HCT116 (cell line): ENCODE measurements at regions of chr18 and their contacts with region 1.

Region 1: GRCh38 chr18:24212939-24213338 is 74.1 kb downstream of the CABYR start:
- DNase-seq: peak; percentile 94
- ATAC-seq: peak; percentile 89
- H3K4me3 ChIP-seq: peak overlapping the region in 1 of 2 experiments; percentile 27; a peak in 2 of 4 replicates
- H3K27ac ChIP-seq: peak overlapping the region; percentile 74; the same call in 1 of the 2 replicates
- H3K4me1 ChIP-seq: peaks cover 71 to 86% of the 10 kb centered on the region in 2 experiments
- H3K27me3 ChIP-seq: no peaks in the 10 kb centered on the region
- CTCF ChIP-seq: no peak
- POLR2A ChIP-seq: no peak
- RAD21 ChIP-seq: no peak

Region 2: DNA sequence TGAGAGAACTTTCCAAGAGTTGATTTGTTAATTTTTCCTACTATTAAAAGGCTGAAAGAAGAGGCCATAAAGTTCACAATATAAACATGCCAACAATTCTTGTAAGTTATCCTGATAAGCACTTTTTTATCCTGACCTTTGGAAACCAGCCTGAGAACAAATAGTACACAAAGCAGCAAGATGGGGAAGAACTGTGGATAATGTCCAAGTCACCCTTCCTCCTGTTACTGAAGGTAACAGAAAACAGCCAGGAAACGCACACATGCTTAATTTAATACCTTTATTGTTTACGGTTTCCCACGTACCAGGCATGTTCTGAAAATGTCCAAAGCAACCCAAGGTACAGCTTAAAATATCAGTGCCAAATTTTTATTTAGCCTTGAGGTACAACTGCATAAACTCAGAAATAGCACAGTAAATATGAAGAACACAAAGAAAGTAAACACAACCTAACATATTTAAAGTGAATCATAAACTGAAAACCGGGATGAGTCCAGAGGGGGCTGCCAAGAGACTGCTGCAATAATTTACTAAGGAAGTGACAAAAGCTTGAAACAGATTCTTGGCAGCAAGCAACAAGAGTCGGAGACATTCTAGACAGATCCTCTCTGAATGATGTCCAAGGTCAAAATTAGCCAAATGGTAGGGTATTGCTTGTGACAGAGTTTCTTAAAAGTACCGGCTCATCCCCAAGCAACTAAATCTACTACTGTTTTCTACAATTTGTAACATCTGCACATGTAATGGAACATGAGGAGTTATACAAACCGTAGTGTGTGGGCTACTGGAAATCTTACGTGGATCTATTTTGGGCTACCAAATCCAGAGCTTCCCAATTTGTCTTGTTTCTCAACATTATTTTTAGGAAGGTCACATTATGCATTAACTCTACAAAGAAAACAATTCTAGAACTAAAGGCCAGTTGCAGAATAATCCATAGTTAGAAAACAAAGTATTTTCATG is 19.1 kb after region 1 on chr18:
- CTCF ChIA-PET with region 1: no interaction called
- POLR2A ChIA-PET with region 1: no interaction called
- RAD21 ChIA-PET with region 1: no interaction called
- intact Hi-C with region 1: no loop called
- DNase-seq: no peak
- ATAC-seq: no peak
- H3K4me3 ChIP-seq: no peak overlapping the region
- H3K27ac ChIP-seq: no peak overlapping the region
- H3K4me1 ChIP-seq: peaks cover 0 to 9% of the 10 kb centered on the region in 2 experiments; a peak in 1 of 4 replicates
- H3K27me3 ChIP-seq: no peaks in the 10 kb centered on the region
- CTCF ChIP-seq: no peak
- POLR2A ChIP-seq: no peak
- RAD21 ChIP-seq: no peak

Region 3: DNA sequence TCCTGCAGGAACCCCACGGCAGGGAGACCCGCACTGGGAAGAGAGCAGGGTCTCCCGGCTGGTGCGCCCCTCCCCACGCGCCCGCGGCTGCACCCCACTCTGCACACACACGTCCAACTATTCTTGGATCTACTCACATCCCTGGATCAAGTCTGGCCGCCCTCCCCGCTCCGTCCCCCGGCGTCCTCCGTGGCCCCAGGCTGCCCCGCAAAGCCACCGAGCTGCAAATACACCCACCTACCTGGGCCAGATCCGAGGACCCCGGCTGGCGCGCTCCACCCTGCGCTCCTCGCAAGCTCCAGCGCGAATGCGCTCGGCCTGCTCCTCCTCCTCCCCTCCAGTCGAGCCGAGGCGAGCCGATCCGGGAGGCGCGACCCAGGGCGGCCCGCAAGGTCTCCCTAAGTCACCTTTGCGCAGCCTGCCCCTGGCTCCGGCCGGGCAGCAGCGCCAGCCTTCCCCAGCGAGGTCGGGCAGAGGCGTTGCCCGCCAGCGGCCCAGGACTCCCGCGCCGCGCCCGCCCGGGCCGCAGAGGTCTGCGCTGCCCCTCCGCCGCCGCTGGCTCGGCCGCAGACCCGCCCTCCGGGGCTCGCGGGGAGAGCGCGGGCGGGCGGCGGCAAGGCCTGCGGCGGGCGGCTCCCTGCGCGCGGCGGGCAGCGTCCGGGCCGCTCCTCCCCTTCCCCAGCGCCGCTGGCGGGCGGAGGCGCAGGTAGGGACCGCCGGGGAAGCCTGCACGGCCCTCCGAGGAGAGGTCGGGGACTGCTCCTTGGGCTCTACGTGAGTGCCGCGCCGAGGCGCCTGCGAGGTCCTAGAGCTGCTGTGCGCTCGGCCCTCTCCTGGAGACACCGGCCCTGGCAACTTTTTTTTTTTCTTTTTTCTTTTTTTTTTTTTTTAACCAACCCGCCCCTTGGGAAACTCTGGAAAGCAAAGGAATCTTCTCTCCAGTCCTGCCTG is 58.7 kb after region 1 on chr18:
- CTCF ChIA-PET with region 1: no interaction called
- POLR2A ChIA-PET with region 1: no interaction called
- RAD21 ChIA-PET with region 1: no interaction called
- intact Hi-C with region 1: loop called (anchors 5 kb)
- DNase-seq: peak; percentile 49
- ATAC-seq: peak; percentile 88
- H3K4me3 ChIP-seq: peak overlapping the region; percentile 71 to 94
- H3K27ac ChIP-seq: peak overlapping the region; percentile 85
- H3K4me1 ChIP-seq: peaks cover 29 to 47% of the 10 kb centered on the region in 2 experiments; a peak in 3 of 4 replicates
- H3K27me3 ChIP-seq: no peaks in the 10 kb centered on the region
- CTCF ChIP-seq: 0 out of 6 replicates have a peak, but pooled peaks of 1 of the 3 experiments have one; percentile 15
- POLR2A ChIP-seq: no peak
- RAD21 ChIP-seq: no peak